AG04450 (cell line): ENCODE measurements at regions of chr15 and their contacts with region 1.

Region 1: DNA sequence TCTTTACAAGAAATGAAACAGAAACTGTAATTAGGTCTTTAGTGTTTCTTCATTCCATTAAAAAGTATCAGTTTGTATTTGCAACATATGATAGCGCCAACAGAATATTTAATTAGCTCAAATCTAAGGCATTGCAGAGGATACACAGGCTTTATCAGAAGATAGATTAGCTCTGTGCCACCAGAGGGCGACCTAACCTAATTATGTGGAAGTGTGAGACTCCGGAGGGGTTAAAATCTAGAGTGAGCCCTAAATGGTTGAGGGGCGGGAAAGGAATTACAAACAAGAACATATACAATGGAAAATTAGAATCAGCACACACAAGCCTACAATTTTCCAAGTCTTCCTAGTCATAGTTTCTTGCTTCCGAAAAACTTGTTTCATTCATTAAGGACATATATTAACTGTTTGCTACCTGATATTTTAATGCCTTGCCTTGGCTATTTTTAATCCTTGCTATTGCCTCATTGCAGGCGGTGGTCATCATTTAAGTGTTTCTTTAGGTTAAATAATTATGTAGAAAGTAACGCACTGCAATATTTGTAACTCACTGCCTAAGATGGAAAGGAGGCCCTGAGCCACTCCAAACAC is 18.0 kb upstream of the RYR3 start:
- DNase-seq: peak; percentile 10
- H3K4me3 ChIP-seq: no peak overlapping the region
- H3K27ac ChIP-seq: no peak overlapping the region
- H3K27me3 ChIP-seq: peaks cover 7% of the 10 kb centered on the region
- CTCF ChIP-seq: peak; percentile 70

Region 2: DNA sequence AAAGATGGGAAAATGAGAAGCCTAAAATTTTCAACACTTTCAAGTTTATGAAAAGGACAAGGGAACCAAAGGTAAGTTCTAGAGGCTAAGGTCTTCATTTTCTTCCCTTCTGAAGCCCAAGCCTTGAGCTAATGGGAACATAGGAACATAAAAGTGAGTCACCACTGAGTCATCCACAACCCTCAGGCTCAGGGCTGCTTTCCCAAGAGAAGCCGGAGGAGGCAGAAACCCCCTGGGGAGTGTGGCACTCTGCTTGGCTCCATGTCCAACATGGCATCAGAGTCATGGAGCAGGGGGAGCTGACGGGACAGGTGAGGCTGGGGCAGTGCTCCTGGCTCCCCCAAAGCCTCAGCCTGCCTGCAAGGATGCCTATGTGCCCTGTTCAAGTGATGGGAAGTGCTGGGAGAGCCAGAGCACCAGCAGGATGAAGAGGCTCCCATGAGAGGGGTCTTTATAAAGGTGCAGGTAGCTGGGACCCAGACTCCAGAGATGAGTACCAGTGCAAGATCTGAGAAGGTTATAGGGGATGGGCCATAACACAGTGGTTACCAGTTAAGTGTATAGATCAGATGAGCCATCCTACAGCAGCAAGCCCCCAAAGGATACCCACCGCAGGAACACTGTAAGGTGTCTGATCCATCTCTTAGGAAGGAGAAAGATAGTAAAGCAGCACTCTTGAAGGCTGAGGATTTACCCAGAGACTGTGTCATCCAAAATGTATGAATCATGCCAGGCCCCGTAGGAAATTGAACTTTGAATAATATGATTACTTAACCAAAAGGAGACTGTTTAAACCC is 13.8 kb before region 1 on chr15:
- CTCF ChIA-PET with region 1: interaction called, 21 read pairs
- POLR2A ChIA-PET with region 1: no interaction called
- DNase-seq: peak; percentile 36
- H3K4me3 ChIP-seq: no peak overlapping the region
- H3K27ac ChIP-seq: no peak overlapping the region
- H3K27me3 ChIP-seq: no peaks in the 10 kb centered on the region
- CTCF ChIP-seq: peak; percentile 29

Region 3: DNA sequence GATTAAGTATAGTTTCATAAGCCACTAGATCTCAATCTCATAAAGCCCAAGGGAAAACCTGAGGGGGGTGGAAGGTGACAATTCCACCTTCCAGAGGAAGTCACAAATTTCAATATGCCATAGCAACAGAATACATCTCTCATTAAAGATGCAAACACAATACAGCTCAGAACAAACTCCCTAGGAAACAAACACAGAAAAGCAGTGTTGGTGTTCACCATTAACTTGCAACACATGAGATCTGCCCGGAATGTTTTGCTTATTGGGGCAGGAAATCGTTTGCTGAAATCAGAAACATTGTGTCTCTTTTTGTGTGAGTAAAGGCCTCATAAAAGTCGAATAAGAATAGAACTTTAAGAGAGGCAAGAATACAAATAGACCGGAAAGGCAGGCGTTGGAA is 12.1 kb after region 1 on chr15:
- CTCF ChIA-PET with region 1: interaction called, 28 read pairs
- POLR2A ChIA-PET with region 1: no interaction called
- DNase-seq: no peak
- H3K4me3 ChIP-seq: no peak overlapping the region
- H3K27ac ChIP-seq: no peak overlapping the region
- H3K27me3 ChIP-seq: peaks cover 5% of the 10 kb centered on the region
- CTCF ChIP-seq: no peak

Region 4: GRCh38 chr15:33377204-33377603 is 84.4 kb after region 1 on chr15:
- CTCF ChIA-PET with region 1: no interaction called
- POLR2A ChIA-PET with region 1: no interaction called
- DNase-seq: no peak
- H3K4me3 ChIP-seq: no peak overlapping the region
- H3K27ac ChIP-seq: no peak overlapping the region
- H3K27me3 ChIP-seq: no peaks in the 10 kb centered on the region
- CTCF ChIP-seq: no peak

Region 5: DNA sequence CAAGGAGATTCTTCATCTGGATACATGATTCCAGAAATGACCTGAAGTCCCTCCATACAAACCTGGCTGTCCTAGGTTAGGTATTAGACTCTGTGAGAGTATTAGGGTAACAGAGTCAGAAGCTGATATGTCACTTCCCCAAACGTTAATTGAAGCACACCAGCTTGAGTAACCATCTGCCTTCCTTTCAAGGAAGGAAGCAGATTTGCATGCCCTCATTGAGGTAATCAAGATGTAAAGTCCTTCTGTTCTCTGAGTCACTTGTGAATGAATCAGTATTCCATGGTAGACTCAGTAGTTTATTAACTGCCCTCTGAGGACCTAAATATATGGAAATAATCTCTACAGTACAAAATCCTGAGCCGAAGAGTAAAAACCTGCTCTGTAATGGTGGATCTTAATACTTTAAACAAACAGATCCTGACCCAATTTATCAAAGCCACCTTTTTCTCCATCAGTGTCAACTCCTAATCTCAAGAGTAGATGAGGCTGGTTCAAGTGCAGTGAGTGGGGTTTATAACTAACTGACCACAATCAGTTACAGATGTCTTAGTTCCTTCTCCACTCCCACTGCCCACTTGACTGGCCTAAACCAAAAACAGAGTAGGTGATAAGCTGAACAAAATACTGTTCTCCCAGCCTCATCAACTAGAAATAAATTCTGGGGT is 429.3 kb after region 1 on chr15:
- CTCF ChIA-PET with region 1: interaction called, 11 read pairs
- POLR2A ChIA-PET with region 1: no interaction called
- DNase-seq: no peak
- H3K4me3 ChIP-seq: no peak overlapping the region
- H3K27ac ChIP-seq: no peak overlapping the region
- H3K27me3 ChIP-seq: no peaks in the 10 kb centered on the region
- CTCF ChIP-seq: no peak

Region 6: GRCh38 chr15:33729653-33730052 is 436.8 kb after region 1 on chr15:
- CTCF ChIA-PET with region 1: interaction called, 12 read pairs
- POLR2A ChIA-PET with region 1: no interaction called
- DNase-seq: no peak
- H3K4me3 ChIP-seq: no peak overlapping the region
- H3K27ac ChIP-seq: no peak overlapping the region
- H3K27me3 ChIP-seq: no peaks in the 10 kb centered on the region
- CTCF ChIP-seq: peak; percentile 26; the same call in 1 of the 2 replicates